ENCODE measurements at regions of chrX and their contacts with region 1.

Region 1: DNA sequence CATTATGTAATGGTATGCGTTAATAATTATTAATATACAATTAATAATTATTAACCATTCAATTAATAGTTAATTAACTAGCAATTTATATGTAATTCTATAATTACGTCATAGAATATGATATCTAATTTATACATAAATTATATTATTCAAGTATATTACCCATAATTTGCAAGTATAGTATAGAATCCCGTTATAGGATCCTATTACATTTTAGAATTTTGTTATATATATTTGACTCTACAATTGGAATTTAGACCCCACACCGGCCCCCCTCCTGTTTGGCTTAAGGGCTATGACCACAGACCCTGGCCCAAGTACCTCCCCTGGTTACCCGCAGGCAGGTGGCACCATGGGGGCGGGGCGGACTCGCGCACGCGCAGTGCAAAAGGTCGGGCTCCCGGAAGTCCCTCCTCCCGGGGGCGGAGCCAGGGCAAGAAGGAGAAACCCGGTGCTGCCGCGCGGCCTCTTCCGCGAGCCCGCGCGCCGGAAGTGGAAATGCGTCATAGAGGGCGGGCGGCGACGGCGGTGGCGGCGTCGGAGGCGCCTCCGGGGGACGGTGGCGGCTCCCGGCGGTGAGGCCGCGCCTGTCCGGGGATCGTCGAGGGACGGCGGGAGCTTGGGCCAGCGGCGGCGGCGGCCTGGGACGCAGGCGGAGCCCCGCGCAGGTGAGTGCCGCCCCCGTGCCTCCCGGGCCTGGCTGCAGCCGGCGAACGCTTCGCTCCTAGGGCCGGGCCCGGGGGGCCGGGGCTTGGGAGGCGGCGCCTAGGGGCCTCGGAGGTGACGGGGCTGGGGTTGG is at the start of gene AKAP17A:
- DNase-seq: peak; percentile 87
- H3K4me3 ChIP-seq: peak within 1 kb of the TSS; percentile 89 to 97 (median 96)
- H3K27ac ChIP-seq: peak within 1 kb of the TSS; percentile 58
- H3K4me1 ChIP-seq: peaks cover 3% of the 10 kb centered on the region
- H3K27me3 ChIP-seq: no peaks in the 10 kb centered on the region
- CTCF ChIP-seq: no peak
- total RNA-seq, gene AKAP17A: 23.0 to 34.9 TPM

Region 2: GRCh38 chrX:1391707-1392375 is 199.5 kb before region 1 on chrX and contains the start of gene SLC25A6:
- CTCF ChIA-PET with region 1: no interaction called
- dilution Hi-C with region 1: no loop called
- in situ Hi-C with region 1: no loop called
- intact Hi-C with region 1: loop called (anchors 5 kb)
- DNase-seq: peak; percentile 97
- H3K4me3 ChIP-seq: peak within 1 kb of the TSS; percentile 84 to 100 (median 100)
- H3K27ac ChIP-seq: peak within 1 kb of the TSS; percentile 91
- H3K4me1 ChIP-seq: peaks cover 24% of the 10 kb centered on the region
- H3K27me3 ChIP-seq: no peaks in the 10 kb centered on the region
- CTCF ChIP-seq: peak in 1 of 2 donors; percentile 20
- total RNA-seq, gene SLC25A6: 215 to 270 TPM

Region 3: GRCh38 chrX:1468250-1468772 is 123.0 kb before region 1 on chrX:
- CTCF ChIA-PET with region 1: no interaction called
- dilution Hi-C with region 1: no loop called
- in situ Hi-C with region 1: loop called in 1 of 2 experiments (anchors 10 kb)
- intact Hi-C with region 1: loop called (anchors 5 kb)
- DNase-seq: peak; percentile 80
- H3K4me3 ChIP-seq: no peak overlapping the region
- H3K27ac ChIP-seq: no peak overlapping the region
- H3K4me1 ChIP-seq: no peaks in the 10 kb centered on the region
- H3K27me3 ChIP-seq: peaks cover 5% of the 10 kb centered on the region
- CTCF ChIP-seq: no peak

Measured in mammary epithelial cell (primary cell).